ENCODE measurements at regions of chr1 and their contacts with region 1.

Region 1: DNA sequence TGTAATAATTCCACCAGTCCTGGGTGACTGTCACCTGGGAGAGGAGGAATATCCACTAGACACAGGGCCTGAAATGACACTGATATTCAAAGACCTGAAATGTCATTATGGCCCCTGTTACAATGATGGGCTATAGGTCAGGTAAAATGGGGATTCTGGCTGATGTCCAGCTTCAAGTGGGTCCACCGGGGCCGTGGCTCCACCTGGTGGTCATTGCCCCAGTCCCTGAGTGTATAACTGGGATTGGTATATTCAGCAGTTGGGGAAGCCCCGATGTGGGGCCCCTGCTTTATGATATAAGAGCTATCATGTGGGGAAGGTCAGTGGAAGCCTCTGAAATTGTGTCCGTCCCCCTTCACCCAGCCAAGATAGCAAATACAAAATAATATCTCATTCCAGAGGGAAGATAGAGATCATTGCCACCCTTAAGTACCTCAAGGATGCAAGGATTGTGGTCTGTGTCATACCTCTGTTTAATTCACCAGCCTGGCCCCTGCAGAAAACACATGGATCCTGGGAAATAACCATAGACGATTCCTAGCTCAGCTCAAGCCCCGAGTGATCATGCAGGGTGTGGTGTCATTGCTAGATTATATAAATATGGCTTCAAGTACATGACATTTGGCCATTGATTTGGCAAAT is 19.4 kb downstream of the PLEKHO1 start:
- H3K4me3 ChIP-seq: no peak overlapping the region
- H3K27ac ChIP-seq: no peak overlapping the region
- H3K4me1 ChIP-seq: no peaks in the 10 kb centered on the region
- CTCF ChIP-seq: peak; percentile 67

Region 2: DNA sequence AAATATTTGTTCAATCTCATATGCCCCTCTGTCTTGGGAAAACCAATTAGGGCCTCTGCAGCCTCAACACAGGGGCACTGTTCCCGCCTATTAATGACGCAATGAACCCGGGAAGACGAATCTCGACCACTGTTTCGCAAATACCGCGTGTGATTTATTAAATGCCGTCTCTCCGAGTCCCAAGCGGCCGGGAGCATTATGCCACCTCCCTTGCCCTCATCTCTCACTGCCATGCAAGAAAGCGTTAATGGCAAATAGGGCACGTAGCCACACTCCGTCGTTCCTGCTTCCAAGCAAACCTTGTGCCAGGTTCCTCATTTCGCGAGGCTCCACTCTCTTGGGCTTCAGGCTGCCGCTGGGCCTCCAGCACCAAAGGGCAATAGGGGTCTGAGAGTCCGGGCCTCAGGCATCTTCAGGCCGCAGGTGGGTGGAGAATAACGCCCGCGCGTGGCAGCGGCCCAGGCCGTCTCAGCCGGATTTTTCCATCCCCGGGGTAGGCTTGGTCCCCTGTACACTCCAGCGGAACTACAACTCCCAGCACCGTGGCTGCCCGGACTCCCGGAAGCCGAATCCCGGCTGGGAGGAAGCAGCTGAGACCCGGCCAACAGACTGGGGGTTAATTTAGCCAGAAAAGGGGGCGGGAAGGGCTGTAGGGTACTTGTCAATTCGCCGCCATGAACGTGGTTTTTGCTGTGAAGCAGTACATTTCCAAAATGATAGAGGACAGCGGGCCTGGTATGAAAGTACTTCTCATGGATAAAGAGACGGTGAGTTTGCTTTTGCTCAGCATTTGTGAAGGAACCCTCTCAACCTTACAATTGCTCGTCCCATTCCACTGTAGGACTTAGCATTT is 101.7 kb before region 1 on chr1 and contains the start of gene VPS45:
- CTCF ChIA-PET with region 1: interaction called, 37 read pairs
- POLR2A ChIA-PET with region 1: no interaction called
- H3K4me3 ChIP-seq: peak within 1 kb of the TSS; percentile 76
- H3K27ac ChIP-seq: peak within 1 kb of the TSS; percentile 96
- H3K4me1 ChIP-seq: peaks cover 6% of the 10 kb centered on the region
- CTCF ChIP-seq: peak; percentile 96

Region 3: GRCh38 chr1:150072959-150073358 is 96.1 kb before region 1 on chr1:
- CTCF ChIA-PET with region 1: interaction called, 37 read pairs
- POLR2A ChIA-PET with region 1: interaction called, 3 read pairs
- H3K4me3 ChIP-seq: no peak overlapping the region
- H3K27ac ChIP-seq: no peak overlapping the region
- H3K4me1 ChIP-seq: no peaks in the 10 kb centered on the region
- CTCF ChIP-seq: no peak

Measured in HEK293 (cell line).